SK-N-SH (cell line): ENCODE measurements at regions of chr16 and their contacts with region 1.

Region 1: DNA sequence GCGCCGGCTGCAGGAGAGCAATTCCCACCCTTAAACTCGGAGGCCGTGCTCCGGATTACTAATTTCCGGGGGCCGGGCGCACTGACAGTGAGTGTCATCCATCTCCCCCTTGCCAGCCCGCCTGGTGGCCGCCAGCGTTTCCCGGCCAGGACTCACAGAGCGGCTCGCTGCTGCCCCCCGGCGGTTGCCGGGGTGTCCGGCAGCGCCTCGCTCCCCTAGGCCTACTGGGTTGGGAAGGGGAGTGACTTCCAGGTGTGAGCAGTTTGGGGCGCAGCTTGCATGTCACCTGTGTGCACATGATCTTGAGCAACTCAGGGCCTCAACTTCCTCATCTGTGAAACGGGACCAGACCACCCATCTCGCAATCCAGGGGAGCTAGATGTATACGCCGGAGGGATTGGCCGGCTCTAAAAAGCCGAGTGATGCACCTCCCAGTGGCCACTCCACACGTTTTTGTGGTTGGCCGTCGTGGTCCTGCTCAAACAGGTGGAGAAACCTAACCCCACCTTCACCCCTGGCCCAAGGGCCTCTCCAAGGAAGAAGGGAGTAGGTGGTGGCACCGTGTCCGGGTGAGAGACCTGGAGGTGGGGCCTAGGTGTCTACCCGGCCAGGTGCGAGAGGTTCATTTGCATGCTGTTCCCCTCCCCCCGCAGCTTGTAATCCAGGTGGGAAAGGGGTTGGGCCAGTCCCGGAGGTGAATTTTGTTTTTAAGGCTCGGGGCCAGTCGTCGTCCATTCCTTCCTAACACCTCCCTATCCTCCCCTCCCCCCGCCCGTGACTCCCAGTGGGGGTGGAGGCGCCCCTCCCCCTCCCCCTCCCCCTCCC is 2.4 kb upstream of the GSE1 start:
- DNase-seq: peak; percentile 83
- H3K4me3 ChIP-seq: peak overlapping the region; percentile 42 to 86; a peak in 3 of 4 replicates
- H3K27ac ChIP-seq: peak overlapping the region; percentile 74 to 97
- H3K4me1 ChIP-seq: peaks cover 14 to 59% of the 10 kb centered on the region in 2 experiments
- H3K27me3 ChIP-seq: no peaks in the 10 kb centered on the region
- CTCF ChIP-seq: peak; percentile 91
- EP300 ChIP-seq: peak in 1 of 2 experiments; percentile 52; a peak in 2 of 4 replicates
- RAD21 ChIP-seq: peak; percentile 94

Region 2: DNA sequence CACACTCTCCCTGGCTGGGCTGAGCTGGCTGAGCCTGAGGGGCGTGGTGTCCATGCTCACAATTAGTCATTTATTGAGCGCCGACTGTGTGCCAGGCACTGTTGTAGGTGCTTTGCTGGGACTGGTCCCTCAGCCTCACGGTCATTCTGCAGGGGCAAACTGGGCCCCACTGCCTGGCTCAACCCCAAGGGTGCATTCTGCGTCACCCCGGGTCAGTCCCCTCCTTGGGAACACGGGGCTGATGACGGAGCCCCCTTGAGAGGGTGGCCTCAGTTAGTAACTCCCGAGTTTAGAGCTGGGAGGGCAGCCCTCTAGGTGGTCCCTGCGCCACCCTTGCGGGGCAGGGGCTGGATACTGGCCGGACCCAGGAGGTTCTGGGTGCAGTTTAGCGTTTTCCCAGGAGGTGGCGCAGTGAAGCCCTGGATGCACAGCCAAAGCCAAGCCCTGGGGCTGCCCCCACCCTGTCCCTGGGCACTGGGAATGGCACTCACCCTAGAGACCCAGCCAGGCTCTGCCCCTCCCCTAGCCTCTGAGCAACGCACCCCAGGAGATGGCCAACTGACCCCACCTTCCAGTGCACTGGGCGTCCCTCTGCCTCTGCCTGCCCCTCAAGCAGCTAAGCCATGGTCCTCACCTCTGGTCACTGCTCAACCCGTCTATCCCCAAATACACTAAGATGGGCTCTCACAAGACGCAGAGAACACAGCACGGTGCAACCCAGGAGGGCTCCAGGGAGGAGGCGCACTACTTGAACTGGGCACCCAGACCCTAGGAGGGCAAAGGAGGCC is 240.8 kb before region 1 on chr16:
- CTCF ChIA-PET with region 1: interaction called, 13 read pairs
- POLR2A ChIA-PET with region 1: no interaction called
- DNase-seq: peak; percentile 84
- H3K4me3 ChIP-seq: no peak overlapping the region
- H3K27ac ChIP-seq: peak overlapping the region; percentile 50 to 95; a peak in 3 of 4 replicates
- H3K4me1 ChIP-seq: peaks cover 25 to 90% of the 10 kb centered on the region in 2 experiments
- H3K27me3 ChIP-seq: no peaks in the 10 kb centered on the region
- CTCF ChIP-seq: peak; percentile 87
- EP300 ChIP-seq: no peak
- RAD21 ChIP-seq: peak; percentile 71

Region 3: GRCh38 chr16:85446951-85447692 is 163.6 kb before region 1 on chr16:
- CTCF ChIA-PET with region 1: interaction called, 21 read pairs
- POLR2A ChIA-PET with region 1: no interaction called
- DNase-seq: no peak
- H3K4me3 ChIP-seq: no peak overlapping the region
- H3K27ac ChIP-seq: peak overlapping the region in 1 of 2 experiments; percentile 97; a peak in 2 of 4 replicates
- H3K4me1 ChIP-seq: peaks cover 0 to 69% of the 10 kb centered on the region in 2 experiments; a peak in 2 of 4 replicates
- H3K27me3 ChIP-seq: no peaks in the 10 kb centered on the region
- CTCF ChIP-seq: no peak
- EP300 ChIP-seq: no peak
- RAD21 ChIP-seq: no peak

Region 4: GRCh38 chr16:85514595-85515318 is 96.0 kb before region 1 on chr16:
- CTCF ChIA-PET with region 1: interaction called, 16 read pairs
- POLR2A ChIA-PET with region 1: interaction called, 4 read pairs
- DNase-seq: peak; percentile 84
- H3K4me3 ChIP-seq: peak overlapping the region in 1 of 2 experiments; percentile 9; a peak in 1 of 4 replicates
- H3K27ac ChIP-seq: peak overlapping the region; percentile 68 to 81
- H3K4me1 ChIP-seq: peaks cover 25 to 48% of the 10 kb centered on the region in 2 experiments; a peak in 3 of 4 replicates
- H3K27me3 ChIP-seq: no peaks in the 10 kb centered on the region
- CTCF ChIP-seq: no peak
- EP300 ChIP-seq: 0 out of 4 replicates have a peak, but pooled peaks of 1 of the 2 experiments have one; percentile 5
- RAD21 ChIP-seq: 0 out of 2 replicates have a peak, but pooled peaks have one; percentile 1

Region 5: GRCh38 chr16:85564277-85565051 is 46.3 kb before region 1 on chr16:
- CTCF ChIA-PET with region 1: interaction called, 51 read pairs
- POLR2A ChIA-PET with region 1: interaction called, 4 read pairs
- DNase-seq: no peak
- H3K4me3 ChIP-seq: no peak overlapping the region
- H3K27ac ChIP-seq: peak overlapping the region in 1 of 2 experiments; percentile 89; a peak in 2 of 4 replicates
- H3K4me1 ChIP-seq: peaks cover 13 to 45% of the 10 kb centered on the region in 2 experiments; a peak in 3 of 4 replicates
- H3K27me3 ChIP-seq: no peaks in the 10 kb centered on the region
- CTCF ChIP-seq: peak; percentile 64
- EP300 ChIP-seq: no peak
- RAD21 ChIP-seq: no peak

Region 6: GRCh38 chr16:85582229-85582991 is 28.3 kb before region 1 on chr16:
- CTCF ChIA-PET with region 1: interaction called, 40 read pairs
- POLR2A ChIA-PET with region 1: interaction called, 3 read pairs
- DNase-seq: no peak
- H3K4me3 ChIP-seq: no peak overlapping the region
- H3K27ac ChIP-seq: peak overlapping the region in 1 of 2 experiments; percentile 56; a peak in 2 of 4 replicates
- H3K4me1 ChIP-seq: peaks cover 20 to 97% of the 10 kb centered on the region in 2 experiments; a peak in 3 of 4 replicates
- H3K27me3 ChIP-seq: no peaks in the 10 kb centered on the region
- CTCF ChIP-seq: no peak
- EP300 ChIP-seq: no peak
- RAD21 ChIP-seq: no peak